Psoas muscle (tissue), 8 donors: ENCODE measurements at regions of chr10 and their contacts with region 1.

Region 1: DNA sequence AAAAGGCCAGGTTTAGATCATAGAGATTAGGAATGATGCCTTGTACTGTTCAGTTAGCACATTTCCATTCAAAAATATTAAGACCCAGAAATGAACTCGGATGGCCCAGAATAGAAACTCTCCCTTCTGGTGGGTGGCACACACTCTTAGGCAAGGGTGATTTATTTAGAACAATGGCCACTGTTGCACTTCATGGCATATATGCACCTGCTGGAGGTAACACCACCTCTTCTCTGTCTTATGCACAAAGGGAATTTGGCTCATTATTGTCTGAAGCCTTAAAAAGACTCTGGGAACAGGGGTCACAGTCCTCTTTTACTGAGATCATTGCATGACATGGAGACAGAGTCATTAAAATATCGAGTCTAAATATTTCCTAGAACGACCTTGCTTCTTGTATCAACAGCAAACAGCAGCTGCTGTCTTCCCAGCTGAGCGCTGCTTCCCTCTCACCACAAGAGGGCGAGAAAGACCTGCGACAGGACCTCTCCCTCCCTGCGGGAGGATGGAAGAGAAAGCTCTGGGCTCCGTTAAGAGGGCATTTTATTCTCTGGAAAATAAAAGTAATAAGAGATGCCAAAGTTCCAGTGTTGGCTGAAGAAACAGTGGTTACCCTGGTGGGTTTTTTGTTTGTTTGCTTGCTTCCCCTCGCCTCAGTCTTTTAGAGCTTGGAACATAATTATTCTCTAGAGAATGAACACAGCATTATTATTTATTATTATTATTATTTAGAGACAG is 13.6 kb upstream of the BAMBI start:
- DNase-seq: peak; percentile 71 to 85
- ATAC-seq: peak; percentile 91 to 94 (median 92)
- H3K4me3 ChIP-seq: no peak overlapping the region
- H3K27ac ChIP-seq: no peak overlapping the region
- H3K4me1 ChIP-seq: peaks cover 9% of the 10 kb centered on the region
- H3K27me3 ChIP-seq: peaks cover 2 to 22% (median 3%) of the 10 kb centered on the region in 3 donors
- CTCF ChIP-seq: peak; percentile 99

Region 2: DNA sequence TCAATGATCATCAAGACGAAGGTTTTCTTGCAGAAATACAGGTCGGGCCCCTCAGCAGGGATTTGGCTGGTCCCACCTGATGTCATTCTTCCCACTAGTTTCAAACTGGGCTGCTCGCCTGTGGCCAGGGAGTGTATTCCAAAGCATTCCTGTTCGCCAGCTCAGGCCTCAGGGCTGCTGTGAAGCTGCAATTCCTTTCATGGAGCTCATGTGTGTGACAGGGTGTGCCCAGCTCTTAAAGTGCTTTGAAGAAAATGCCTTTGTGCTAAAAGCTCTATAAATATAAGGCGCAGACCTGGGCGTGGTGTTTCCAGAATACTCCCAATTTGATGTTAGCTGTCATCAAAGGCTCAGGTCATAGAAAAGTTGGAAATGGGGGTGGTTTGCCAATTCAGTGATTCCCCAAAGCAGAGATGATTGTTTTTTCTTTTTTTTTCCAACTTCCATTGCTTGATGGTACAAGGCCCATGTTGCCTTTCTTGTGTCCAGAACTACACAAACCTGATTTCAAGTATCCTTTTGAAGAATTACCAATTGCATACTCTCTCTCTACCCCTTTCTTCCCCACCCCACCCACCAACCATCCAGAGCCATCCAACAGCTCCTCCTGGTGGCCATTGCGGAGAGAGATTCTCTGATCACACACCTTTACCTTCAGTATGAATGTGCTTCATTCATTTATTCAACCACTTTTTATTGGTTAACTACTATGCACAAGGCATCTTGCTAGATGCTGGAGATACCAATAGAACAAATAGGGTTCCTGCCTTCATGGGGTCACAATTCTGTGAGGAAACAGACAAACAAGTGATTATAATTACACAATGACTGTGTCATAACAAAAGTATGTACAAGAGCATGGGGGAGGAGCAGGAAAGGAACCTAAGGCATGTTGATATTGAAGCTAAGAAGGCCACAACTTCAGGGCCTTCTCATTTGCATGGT is 327.9 kb after region 1 on chr10:
- intact Hi-C with region 1: loop called (anchors 1 to 2 kb)
- DNase-seq: peak in 1 of 2 donors; percentile 29
- ATAC-seq: peak; percentile 62 to 87 (median 70)
- H3K4me3 ChIP-seq: no peak overlapping the region
- H3K27ac ChIP-seq: no peak overlapping the region
- H3K4me1 ChIP-seq: no peaks in the 10 kb centered on the region
- H3K27me3 ChIP-seq: no peaks in the 10 kb centered on the region
- CTCF ChIP-seq: peak; percentile 73

Region 3: GRCh38 chr10:29131952-29132820 is 468.4 kb after region 1 on chr10:
- intact Hi-C with region 1: loop called in 1 of 2 experiments (anchors 5 kb)
- DNase-seq: no peak
- ATAC-seq: peak in 1 of 4 donors; percentile 33
- H3K4me3 ChIP-seq: no peak overlapping the region
- H3K27ac ChIP-seq: no peak overlapping the region
- H3K4me1 ChIP-seq: peaks cover 11% of the 10 kb centered on the region
- H3K27me3 ChIP-seq: no peaks in the 10 kb centered on the region
- CTCF ChIP-seq: no peak